ENCODE measurements at regions of chr1 and their contacts with region 1.

Region 1: GRCh38 chr1:224922404-224923164 is 6.9 kb upstream of the DNAH14 start:
- DNase-seq: no peak

Region 2: GRCh38 chr1:224513787-224514209 is 408.8 kb before region 1 on chr1:
- intact Hi-C with region 1: loop called (anchors 2 kb)
- DNase-seq: peak; percentile 91

Region 3: GRCh38 chr1:224644553-224645154 is 277.9 kb before region 1 on chr1:
- intact Hi-C with region 1: loop called (anchors 5 kb)
- DNase-seq: no peak

Region 4: GRCh38 chr1:224759681-224760091 is 162.9 kb before region 1 on chr1:
- intact Hi-C with region 1: no loop called
- DNase-seq: no peak

Measured in cardiac septum (tissue), 1 donor.